Calu3 (cell line): ENCODE measurements at regions of chr7 and their contacts with region 1.

Region 1: DNA sequence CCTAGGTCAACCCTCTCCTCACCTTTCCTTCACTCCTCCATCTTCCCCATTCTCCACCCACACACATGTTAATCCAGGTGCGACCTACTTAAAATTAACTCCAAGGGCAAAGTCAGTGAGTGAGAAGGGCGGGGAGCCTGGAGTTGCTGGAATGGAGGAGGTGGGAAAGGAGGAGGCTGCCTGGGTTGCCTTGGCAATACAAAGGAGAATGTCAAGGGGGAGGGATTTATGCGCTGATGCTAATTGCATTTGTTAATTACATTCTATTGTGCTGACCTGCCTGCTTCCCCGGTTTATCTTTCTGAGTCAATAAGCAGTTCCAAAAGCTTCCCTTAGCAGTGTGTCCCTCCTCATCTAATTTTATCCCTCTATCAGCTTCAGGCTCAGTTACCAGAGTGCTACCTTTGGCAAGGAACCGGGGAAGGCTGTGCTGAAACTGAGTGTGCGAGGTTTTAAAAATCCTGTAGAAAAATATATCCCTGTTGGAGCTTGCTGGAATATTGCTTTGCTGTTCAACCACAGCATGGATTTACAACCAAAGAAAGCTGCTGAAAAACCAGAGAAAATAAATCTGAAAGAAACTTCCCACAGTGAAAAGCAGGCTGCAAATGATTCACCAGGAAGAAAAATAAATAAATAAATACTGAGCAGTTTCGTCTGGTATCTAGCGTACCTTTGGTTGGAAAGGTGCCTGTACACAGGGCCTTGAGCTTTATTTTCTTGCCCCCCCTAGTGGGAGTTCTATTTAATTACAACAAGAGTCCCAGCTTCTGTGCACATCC is 113.2 kb upstream of the DGKB start:
- DNase-seq: peak; percentile 76
- H3K4me3 Mint-ChIP-seq: peak overlapping the region; percentile 39
- H3K27ac Mint-ChIP-seq: peak overlapping the region; percentile 27
- H3K4me1 Mint-ChIP-seq: peaks cover 17% of the 10 kb centered on the region
- H3K27me3 Mint-ChIP-seq: no peaks in the 10 kb centered on the region
- CTCF ChIP-seq: peak; percentile 75

Region 2: DNA sequence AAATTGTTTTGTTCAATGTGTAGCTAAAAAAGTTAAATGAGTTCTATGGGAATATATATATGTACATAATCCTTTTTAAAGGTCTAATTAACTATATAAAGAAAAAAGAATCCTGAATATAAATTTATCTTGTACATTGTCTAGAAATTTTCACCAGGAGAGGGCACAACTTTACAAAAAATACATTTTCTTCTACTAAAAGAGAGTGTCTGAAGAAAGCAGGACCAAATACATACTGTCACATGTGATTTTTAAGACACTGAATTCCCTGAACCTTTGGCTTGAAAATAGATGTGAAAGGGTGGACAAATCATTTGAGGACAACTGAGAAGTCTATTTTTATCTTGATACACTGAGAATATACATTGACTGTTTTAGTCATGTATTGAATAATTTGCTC is 317.5 kb before region 1 on chr7:
- CTCF ChIA-PET with region 1: interaction called, 3 read pairs
- intact Hi-C with region 1: loop called (anchors 5 kb)
- DNase-seq: no peak
- H3K4me3 Mint-ChIP-seq: no peak overlapping the region
- H3K27ac Mint-ChIP-seq: no peak overlapping the region
- H3K4me1 Mint-ChIP-seq: peaks cover 10% of the 10 kb centered on the region
- H3K27me3 Mint-ChIP-seq: no peaks in the 10 kb centered on the region
- CTCF ChIP-seq: peak; percentile 57

Region 3: GRCh38 chr7:14902589-14903067 is 113.1 kb before region 1 on chr7 and contains the start of gene DGKB:
- CTCF ChIA-PET with region 1: interaction called, 10 read pairs
- intact Hi-C with region 1: no loop called
- DNase-seq: no peak
- H3K4me3 Mint-ChIP-seq: no peak within 1 kb of the TSS
- H3K27ac Mint-ChIP-seq: no peak within 1 kb of the TSS
- H3K4me1 Mint-ChIP-seq: no peaks in the 10 kb centered on the region
- H3K27me3 Mint-ChIP-seq: no peaks in the 10 kb centered on the region
- CTCF ChIP-seq: no peak
- total RNA-seq, gene DGKB: 0.12 TPM in 1 of 2 replicates, not detected in the other

Region 4: GRCh38 chr7:14924398-14924797 is 91.3 kb before region 1 on chr7:
- CTCF ChIA-PET with region 1: interaction called, 5 read pairs
- intact Hi-C with region 1: loop called (anchors 2 kb)
- DNase-seq: no peak
- H3K4me3 Mint-ChIP-seq: no peak overlapping the region
- H3K27ac Mint-ChIP-seq: peak overlapping the region; percentile 14
- H3K4me1 Mint-ChIP-seq: no peaks in the 10 kb centered on the region
- H3K27me3 Mint-ChIP-seq: no peaks in the 10 kb centered on the region
- CTCF ChIP-seq: no peak

Region 5: DNA sequence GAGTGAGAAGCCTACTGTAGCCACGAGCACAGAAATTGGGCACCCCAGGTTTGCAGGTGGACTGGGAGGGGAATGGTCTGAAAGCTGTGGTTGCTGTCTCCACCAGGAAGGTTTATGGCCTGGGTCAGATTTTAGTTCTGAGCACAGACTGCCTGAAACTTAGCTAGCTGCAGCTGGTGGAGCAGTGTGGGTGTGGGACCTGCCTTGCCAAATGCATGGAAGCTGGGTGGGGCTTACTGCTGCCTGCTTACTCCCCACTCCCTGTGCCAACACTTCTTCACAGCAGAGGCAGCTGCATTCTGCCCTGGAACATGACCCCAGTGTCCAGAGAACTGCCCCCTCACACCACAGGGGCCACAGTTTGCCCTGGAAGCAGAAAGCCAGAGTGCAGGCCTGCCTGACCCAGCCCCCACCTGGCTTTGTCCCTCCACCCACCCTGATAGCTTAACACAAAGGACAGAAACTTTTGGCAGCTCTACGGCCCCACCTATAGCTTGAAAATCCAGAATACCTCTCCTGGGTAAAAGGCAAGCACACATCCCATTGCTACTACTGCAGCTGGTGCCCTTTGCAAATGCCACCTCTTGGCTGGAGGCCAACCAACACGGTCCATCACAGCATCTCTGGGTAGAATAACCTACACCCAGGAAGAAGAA is 264.5 kb after region 1 on chr7:
- CTCF ChIA-PET with region 1: no interaction called
- intact Hi-C with region 1: loop called (anchors 10 kb)
- DNase-seq: no peak
- H3K4me3 Mint-ChIP-seq: no peak overlapping the region
- H3K27ac Mint-ChIP-seq: no peak overlapping the region
- H3K4me1 Mint-ChIP-seq: no peaks in the 10 kb centered on the region
- H3K27me3 Mint-ChIP-seq: no peaks in the 10 kb centered on the region
- CTCF ChIP-seq: no peak